Activated CD4-positive, alpha-beta memory T cell treated with anti-CD3 and anti-CD28 coated beads, Interleukin-2, amount 10 ng/mL, durations not matched to agents 7 days and 5 days (primary cell): ENCODE measurements at regions of chr16 and their contacts with region 1.

Region 1: DNA sequence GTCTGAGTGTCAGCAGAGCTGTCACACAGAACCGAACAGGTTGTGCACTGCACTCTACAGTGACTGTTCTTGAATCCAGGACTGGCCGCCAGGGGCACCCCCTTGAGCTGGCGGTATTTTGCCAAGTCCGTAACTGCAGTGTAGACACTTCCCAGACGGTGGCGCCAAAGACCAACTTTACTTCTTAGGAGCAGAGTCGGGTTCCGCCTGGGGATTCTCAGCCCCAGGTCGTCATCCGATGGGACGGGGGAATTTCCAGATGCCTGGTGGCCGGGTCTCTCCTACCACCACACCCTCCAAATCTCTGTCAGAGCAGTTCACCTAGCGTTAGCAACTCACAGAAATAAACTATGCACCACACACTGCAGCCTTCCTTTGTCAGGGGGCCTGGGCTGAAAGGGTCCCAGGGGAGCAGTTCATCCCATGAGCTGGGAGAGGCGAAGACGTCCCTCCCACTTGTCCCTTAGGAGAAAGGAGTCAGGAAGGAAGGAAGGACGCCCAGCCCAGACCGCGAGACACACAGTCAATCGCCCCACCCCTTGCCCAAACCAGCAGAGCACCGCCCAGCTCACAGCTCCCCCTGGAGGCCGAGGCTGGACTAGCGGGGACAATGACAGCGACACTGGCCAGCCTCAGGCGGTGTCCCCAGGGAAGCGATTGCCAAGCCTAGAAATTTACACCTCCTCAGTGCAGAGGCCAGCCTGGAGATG is 7.4 kb upstream of the RIPOR1 start:
- DNase-seq: peak; percentile 98
- H3K4me3 Mint-ChIP-seq: peak overlapping the region; percentile 81
- H3K27ac Mint-ChIP-seq: peak overlapping the region; percentile 97
- H3K4me1 Mint-ChIP-seq: peaks cover 34% of the 10 kb centered on the region
- H3K27me3 Mint-ChIP-seq: peaks cover 14% of the 10 kb centered on the region

Region 2: GRCh38 chr16:67480833-67481560 is 40.3 kb before region 1 on chr16 and contains the start of gene ATP6V0D1:
- CTCF ChIA-PET with region 1: interaction called, 74 read pairs
- POLR2A ChIA-PET with region 1: interaction called, 13 read pairs
- DNase-seq: peak; percentile 99
- H3K4me3 Mint-ChIP-seq: peak within 1 kb of the TSS; percentile 98
- H3K27ac Mint-ChIP-seq: peak within 1 kb of the TSS; percentile 96
- H3K4me1 Mint-ChIP-seq: peaks cover 46% of the 10 kb centered on the region
- H3K27me3 Mint-ChIP-seq: no peaks in the 10 kb centered on the region
- total RNA-seq, gene ATP6V0D1: 52.8 to 59.5 TPM

Region 3: DNA sequence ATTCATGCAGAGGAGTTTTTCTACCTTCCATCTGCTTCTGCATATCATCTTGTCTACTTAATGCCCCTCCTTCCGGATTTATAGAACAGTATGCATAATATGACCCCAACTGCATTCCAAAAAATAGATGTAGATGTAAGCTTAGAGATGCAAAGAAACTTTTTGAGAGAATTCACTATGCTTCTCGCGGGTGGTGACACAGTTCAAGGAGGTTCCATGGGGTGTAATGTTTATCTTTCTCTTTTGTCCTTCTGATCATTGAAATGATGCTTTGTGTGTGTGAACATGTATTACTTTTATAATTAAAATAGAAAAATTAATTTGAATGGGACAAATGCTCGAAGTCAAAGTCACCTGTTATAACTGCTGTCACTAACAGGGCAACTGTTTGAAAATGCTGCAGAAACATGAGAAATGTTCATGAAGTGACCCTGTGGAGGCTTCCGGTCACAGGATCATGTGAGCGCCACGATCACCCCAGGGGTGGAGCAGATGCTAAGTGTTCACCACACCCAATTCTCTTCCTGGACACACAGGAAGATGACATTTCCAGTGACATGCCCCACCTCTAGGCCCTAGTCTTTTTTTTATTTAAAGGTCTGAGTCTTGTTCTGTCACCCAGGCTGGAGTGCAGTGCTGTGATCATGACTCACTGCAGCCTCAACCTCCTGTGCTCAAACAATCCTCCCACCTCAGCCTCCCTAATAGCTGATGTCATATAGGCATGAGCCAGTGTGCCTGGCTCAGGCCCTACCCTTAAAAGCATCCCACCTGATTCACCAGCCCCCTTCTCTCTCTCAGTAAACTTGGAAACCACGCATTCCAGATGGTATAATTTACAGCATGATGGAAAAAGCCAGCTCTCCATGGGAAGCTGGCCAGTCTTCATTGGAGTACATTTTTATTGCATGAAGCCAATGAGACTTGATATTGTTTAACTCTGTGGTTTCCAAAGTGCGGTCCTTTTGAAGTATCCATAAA is 16.9 kb before region 1 on chr16:
- CTCF ChIA-PET with region 1: interaction called, 261 read pairs
- POLR2A ChIA-PET with region 1: interaction called, 3 read pairs
- DNase-seq: peak; percentile 85
- H3K4me3 Mint-ChIP-seq: no peak overlapping the region
- H3K27ac Mint-ChIP-seq: peak overlapping the region; percentile 97
- H3K4me1 Mint-ChIP-seq: peaks cover 49% of the 10 kb centered on the region
- H3K27me3 Mint-ChIP-seq: no peaks in the 10 kb centered on the region

Region 4: GRCh38 chr16:67546761-67547422 is 25.6 kb after region 1 on chr16:
- CTCF ChIA-PET with region 1: interaction called, 53 read pairs
- POLR2A ChIA-PET with region 1: interaction called, 6 read pairs
- DNase-seq: peak; percentile 81
- H3K4me3 Mint-ChIP-seq: peak overlapping the region; percentile 37
- H3K27ac Mint-ChIP-seq: peak overlapping the region; percentile 96
- H3K4me1 Mint-ChIP-seq: peaks cover 47% of the 10 kb centered on the region
- H3K27me3 Mint-ChIP-seq: no peaks in the 10 kb centered on the region

Region 5: DNA sequence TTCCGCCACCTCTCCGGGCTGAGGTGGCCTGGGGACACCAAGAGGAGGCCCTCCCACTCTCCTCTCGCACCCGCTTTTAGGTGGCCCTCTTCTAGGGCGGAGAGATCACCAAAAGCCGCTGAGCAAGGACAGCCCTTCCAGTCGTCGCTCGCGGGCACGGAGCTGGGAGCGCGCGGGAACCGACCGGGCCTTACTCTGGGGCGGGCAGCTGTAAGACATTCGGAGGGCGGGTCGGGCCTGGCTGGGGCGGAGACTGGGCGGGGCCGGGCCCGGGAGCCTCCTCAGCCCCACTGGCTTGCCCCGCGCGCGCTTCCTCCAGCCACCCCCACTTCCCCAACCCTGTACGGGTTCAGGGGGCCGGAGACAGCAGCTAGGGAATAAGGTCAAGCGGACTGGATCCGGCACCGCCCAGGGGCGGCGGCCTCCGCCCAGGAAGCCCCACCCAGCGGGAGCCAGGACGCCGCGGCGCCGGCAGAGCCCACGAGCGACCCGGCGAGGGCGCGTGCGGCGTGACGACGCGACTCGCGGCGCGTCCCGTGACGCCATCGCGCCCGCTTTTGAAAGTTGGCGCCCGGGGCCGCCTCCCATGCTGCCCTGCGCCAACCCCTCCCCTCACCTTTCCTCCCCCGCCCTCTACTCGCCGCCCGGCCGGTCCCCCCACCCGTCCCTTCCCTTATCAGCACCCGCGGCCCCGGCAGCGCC is 40.7 kb after region 1 on chr16:
- CTCF ChIA-PET with region 1: interaction called, 56 read pairs
- POLR2A ChIA-PET with region 1: interaction called, 6 read pairs
- DNase-seq: peak; percentile 99
- H3K4me3 Mint-ChIP-seq: peak overlapping the region; percentile 86
- H3K27ac Mint-ChIP-seq: peak overlapping the region; percentile 92
- H3K4me1 Mint-ChIP-seq: peaks cover 43% of the 10 kb centered on the region
- H3K27me3 Mint-ChIP-seq: no peaks in the 10 kb centered on the region

Region 6: DNA sequence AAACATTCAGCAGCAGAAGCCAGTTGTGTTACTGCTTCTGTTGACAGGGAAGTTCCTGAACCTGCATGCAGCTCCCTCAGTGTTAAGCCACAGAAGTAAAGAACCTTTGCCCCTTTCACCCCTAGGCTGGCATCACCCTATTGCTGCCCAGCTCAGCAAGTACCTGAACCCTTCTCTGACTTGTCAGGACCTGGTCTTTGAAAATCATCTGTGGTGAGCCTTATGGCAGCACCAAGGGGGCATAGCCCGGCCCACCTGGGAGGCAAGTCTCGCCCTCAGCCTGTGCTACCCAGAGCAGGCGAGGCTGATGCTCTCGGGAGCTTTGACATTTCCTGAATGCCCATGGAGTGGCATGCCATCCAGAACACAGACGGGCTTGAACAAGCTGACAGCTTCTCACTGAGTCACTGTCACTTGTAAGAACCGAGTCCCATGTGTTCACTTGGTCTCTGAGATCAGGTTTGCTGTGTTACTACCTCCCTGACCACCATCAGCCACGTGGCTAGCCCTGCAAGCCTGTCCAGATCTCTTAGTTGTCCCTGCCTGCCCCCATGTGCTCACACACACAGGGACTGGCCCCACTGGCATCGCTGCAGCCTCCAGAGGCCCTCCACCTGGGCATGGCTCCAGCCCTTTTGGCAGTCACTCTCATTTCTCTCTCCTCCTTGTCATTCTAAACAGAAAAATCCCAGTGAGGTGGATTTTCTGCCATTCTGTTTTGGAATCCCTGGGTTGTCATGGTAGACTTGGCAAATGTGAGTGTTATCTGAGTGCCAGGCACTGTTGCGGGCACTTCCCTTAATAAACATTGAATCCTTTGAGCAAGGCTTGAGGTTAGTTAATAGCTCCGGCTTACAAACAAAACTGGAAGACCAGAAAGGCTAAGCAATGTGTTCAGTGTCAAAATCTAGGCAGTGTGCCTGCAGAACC is 120.8 kb after region 1 on chr16:
- CTCF ChIA-PET with region 1: interaction called, 107 read pairs
- POLR2A ChIA-PET with region 1: interaction called, 19 read pairs
- DNase-seq: no peak
- H3K4me3 Mint-ChIP-seq: no peak overlapping the region
- H3K27ac Mint-ChIP-seq: no peak overlapping the region
- H3K4me1 Mint-ChIP-seq: peaks cover 24% of the 10 kb centered on the region
- H3K27me3 Mint-ChIP-seq: no peaks in the 10 kb centered on the region

Region 7: GRCh38 chr16:67667817-67668494 is 146.7 kb after region 1 on chr16:
- CTCF ChIA-PET with region 1: interaction called, 179 read pairs
- POLR2A ChIA-PET with region 1: interaction called, 12 read pairs
- DNase-seq: peak; percentile 88
- H3K4me3 Mint-ChIP-seq: peak overlapping the region; percentile 86
- H3K27ac Mint-ChIP-seq: no peak overlapping the region
- H3K4me1 Mint-ChIP-seq: peaks cover 30% of the 10 kb centered on the region
- H3K27me3 Mint-ChIP-seq: no peaks in the 10 kb centered on the region

Region 8: GRCh38 chr16:67697422-67698185 is 176.4 kb after region 1 on chr16:
- CTCF ChIA-PET with region 1: no interaction called
- POLR2A ChIA-PET with region 1: no interaction called
- DNase-seq: no peak
- H3K4me3 Mint-ChIP-seq: no peak overlapping the region
- H3K27ac Mint-ChIP-seq: no peak overlapping the region
- H3K4me1 Mint-ChIP-seq: peaks cover 5% of the 10 kb centered on the region
- H3K27me3 Mint-ChIP-seq: no peaks in the 10 kb centered on the region